Transverse colon (tissue), 4 donors: ENCODE measurements at regions of chr13 and their contacts with region 1.

Region 1: DNA sequence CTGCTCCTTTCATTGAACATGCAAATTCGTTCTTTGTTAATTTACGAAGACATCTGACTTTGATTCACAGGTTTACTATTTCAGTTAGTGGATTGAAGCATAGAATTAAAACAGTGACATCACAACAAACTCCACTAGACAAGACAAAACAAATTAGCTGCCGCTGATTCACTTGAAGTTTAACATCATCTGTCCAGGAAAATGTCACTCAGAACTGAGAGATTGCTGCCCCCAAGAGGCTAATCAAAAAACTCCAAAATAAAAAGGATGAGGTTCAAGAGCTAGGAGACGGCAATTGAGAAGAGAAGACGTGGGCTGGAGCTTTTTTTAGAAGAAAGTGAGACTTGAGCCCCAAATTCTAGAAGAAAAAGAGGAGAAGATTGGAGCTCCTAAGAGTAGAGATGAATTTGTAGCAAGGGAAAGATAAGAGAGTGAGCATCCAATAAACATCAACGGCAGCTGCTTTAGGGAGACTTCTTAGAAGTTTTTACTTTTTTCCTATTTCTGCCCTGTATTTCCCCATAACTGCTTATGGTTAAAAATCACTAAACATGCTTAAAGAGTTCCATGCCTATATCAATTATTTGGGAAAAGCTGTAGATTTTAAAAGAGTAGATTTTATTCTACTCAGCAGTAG is 40.8 kb upstream of the TPP2 start:
- DNase-seq: no peak
- H3K4me3 ChIP-seq: no peak overlapping the region
- H3K27ac ChIP-seq: no peak overlapping the region
- H3K4me1 ChIP-seq: no peaks in the 10 kb centered on the region
- H3K27me3 ChIP-seq: no peaks in the 10 kb centered on the region
- CTCF ChIP-seq: peak in 4 of 5 experiments; percentile 22 to 39 (median 30)
- EP300 ChIP-seq: no peak
- POLR2A ChIP-seq: no peak

Region 2: GRCh38 chr13:101930331-101930730 is 625.7 kb before region 1 on chr13:
- in situ Hi-C with region 1: loop called in 3 of 4 experiments (anchors 25 kb)
- intact Hi-C with region 1: loop called (anchors 10 kb)
- DNase-seq: no peak
- H3K4me3 ChIP-seq: no peak overlapping the region
- H3K27ac ChIP-seq: no peak overlapping the region
- H3K4me1 ChIP-seq: no peaks in the 10 kb centered on the region
- H3K27me3 ChIP-seq: no peaks in the 10 kb centered on the region
- CTCF ChIP-seq: no peak
- EP300 ChIP-seq: no peak
- POLR2A ChIP-seq: no peak